ENCODE measurements at regions of chr14 and their contacts with region 1.

Region 1: DNA sequence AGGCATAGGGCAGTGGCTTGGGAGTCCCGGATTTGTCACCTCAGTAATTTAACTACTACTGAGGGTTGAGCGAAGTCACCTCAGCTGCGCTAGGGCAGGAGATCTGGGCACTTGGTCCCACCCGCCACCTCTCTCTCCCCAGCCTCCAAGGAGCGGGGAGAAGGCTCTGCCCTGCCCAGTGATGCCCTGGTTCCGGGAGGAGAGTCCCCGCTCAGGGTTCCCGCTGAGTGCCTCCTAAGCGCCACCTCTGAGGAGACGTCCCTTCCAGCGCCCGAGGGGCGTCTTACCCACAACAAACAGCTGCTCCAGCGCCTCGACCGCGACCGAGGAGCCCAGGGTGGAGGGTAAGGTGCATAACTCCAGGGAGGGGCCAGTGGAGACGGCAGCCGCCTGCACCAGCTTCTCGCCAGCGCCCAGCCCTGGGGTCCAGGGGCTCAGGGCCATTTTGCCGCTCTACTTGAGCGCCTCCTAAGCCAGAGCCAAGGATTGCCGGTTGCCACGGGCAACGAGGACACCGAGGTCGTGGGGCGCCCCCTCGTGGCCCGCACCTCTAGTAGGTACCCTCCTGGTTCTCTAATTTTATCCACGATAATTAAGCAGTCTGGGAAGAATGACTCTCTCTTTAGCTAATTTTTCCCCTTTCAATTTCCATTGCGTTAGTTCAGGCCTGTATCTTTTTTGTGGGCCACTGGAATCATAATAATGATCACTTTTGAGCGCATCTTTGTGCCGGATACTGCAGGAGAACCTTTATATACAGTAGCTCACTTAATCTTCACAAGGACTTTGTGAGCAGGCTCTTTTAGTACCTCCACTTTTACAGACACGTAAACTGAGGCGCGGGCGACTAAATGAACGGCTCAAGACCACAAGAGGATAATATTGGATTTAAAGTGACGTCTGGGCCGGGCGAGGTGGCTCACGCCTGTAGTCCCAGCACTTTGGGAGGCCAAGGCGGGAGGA is at the start of gene CCDC175:
- H3K4me3 ChIP-seq: peak within 1 kb of the TSS; percentile 63
- H3K27ac ChIP-seq: peak within 1 kb of the TSS; percentile 57; the same call in 1 of the 2 replicates
- H3K4me1 ChIP-seq: no peaks in the 10 kb centered on the region; the same call in 1 of the 2 replicates
- CTCF ChIP-seq: peak; percentile 90

Region 2: GRCh38 chr14:59126710-59127432 is 449.7 kb before region 1 on chr14:
- CTCF ChIA-PET with region 1: interaction called, 13 read pairs
- POLR2A ChIA-PET with region 1: no interaction called
- H3K4me3 ChIP-seq: no peak overlapping the region
- H3K27ac ChIP-seq: no peak overlapping the region
- H3K4me1 ChIP-seq: peaks cover under 1% of the 10 kb centered on the region; the same call in 1 of the 2 replicates
- CTCF ChIP-seq: 0 out of 2 replicates have a peak, but pooled peaks have one; percentile 24

Region 3: GRCh38 chr14:59422069-59422881 is 154.3 kb before region 1 on chr14:
- CTCF ChIA-PET with region 1: no interaction called
- POLR2A ChIA-PET with region 1: no interaction called
- H3K4me3 ChIP-seq: no peak overlapping the region
- H3K27ac ChIP-seq: no peak overlapping the region
- H3K4me1 ChIP-seq: no peaks in the 10 kb centered on the region
- CTCF ChIP-seq: no peak

Region 4: DNA sequence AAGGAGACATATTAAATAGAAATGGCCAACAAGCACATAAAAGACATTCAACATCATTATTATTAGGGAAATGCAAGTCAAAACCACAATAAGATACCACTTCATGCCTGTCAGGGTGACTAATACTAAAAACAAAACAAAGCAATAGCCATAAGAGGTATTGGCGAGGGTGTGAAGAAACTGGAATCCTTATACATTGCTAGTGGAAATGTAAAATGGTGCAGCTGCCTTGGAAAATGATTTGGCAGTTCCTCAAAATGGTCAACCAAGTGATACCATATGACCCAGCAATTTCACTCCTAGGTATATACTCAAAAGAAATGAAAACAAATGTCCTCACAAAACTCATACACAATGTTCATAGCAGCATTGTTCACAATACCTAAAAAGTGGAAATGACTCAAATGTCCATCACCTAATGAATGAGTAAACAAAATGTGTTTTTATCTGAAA is 138.4 kb before region 1 on chr14:
- CTCF ChIA-PET with region 1: no interaction called
- POLR2A ChIA-PET with region 1: no interaction called
- H3K4me3 ChIP-seq: no peak overlapping the region
- H3K27ac ChIP-seq: no peak overlapping the region
- H3K4me1 ChIP-seq: no peaks in the 10 kb centered on the region
- CTCF ChIP-seq: no peak

Region 5: GRCh38 chr14:59483900-59484638 is 92.5 kb before region 1 on chr14 and contains the starts of genes JKAMP and L3HYPDH:
- CTCF ChIA-PET with region 1: interaction called, 10 read pairs
- POLR2A ChIA-PET with region 1: no interaction called
- H3K4me3 ChIP-seq: peak within 1 kb of the TSS; percentile 84
- H3K27ac ChIP-seq: peak within 1 kb of the TSS; percentile 84
- H3K4me1 ChIP-seq: 0 out of 2 replicates have a peak, but pooled peaks cover 3% of the 10 kb centered on the region
- CTCF ChIP-seq: peak; percentile 95

Region 6: GRCh38 chr14:59507063-59507780 is 69.4 kb before region 1 on chr14:
- CTCF ChIA-PET with region 1: interaction called, 208 read pairs
- POLR2A ChIA-PET with region 1: interaction called, 7 read pairs
- H3K4me3 ChIP-seq: no peak overlapping the region
- H3K27ac ChIP-seq: no peak overlapping the region
- H3K4me1 ChIP-seq: no peaks in the 10 kb centered on the region; the same call in 1 of the 2 replicates
- CTCF ChIP-seq: 0 out of 2 replicates have a peak, but pooled peaks have one; percentile 50

Region 7: DNA sequence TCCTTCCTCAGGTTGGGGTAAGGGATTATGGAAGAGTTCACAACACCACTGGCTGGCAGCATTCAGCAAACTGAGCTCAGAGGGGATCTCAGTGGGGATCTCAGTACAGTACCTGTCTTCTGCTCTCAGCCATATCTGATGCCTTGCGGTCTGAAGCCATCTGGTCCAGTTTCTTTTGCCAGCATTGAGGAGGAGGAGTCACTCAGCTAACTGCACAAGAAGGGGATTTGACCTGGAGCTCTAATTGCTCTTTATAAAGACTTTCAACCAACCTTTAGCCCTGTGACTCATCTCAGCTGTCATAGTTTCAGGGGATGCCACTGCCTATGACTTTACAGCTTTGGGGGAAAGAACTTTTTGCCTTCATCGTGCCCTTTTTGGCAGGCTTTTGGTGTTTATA is 47.4 kb before region 1 on chr14:
- CTCF ChIA-PET with region 1: interaction called, 11 read pairs
- POLR2A ChIA-PET with region 1: no interaction called
- H3K4me3 ChIP-seq: no peak overlapping the region
- H3K27ac ChIP-seq: no peak overlapping the region
- H3K4me1 ChIP-seq: no peaks in the 10 kb centered on the region
- CTCF ChIP-seq: no peak

Region 8: GRCh38 chr14:59543873-59544272 is 32.7 kb before region 1 on chr14:
- CTCF ChIA-PET with region 1: interaction called, 20 read pairs
- POLR2A ChIA-PET with region 1: no interaction called
- H3K4me3 ChIP-seq: no peak overlapping the region
- H3K27ac ChIP-seq: no peak overlapping the region; the same call in 1 of the 2 replicates
- H3K4me1 ChIP-seq: peaks cover 25% of the 10 kb centered on the region
- CTCF ChIP-seq: no peak

Region 9: GRCh38 chr14:59564366-59564765 is 12.2 kb before region 1 on chr14:
- CTCF ChIA-PET with region 1: interaction called, 40 read pairs
- POLR2A ChIA-PET with region 1: no interaction called
- H3K4me3 ChIP-seq: no peak overlapping the region
- H3K27ac ChIP-seq: no peak overlapping the region
- H3K4me1 ChIP-seq: peaks cover 30% of the 10 kb centered on the region
- CTCF ChIP-seq: no peak

Region 10: DNA sequence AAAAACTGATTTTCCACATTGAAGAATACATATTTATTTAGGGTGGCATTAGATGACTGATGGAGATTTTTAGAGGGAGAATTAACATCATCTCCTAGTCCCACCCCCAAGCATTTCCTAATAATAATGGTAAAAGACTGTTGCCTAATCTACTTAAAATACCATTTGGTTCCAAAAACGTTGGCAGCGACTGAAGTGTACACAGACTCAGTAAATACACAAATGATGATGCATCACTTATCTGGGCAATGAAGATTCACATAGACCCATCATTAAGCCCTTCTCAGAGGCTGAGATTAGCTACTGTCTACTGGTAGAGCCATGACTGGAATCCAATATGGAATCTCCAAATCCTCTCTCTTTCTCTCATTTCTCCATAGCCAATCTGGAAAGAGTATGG is 275.7 kb after region 1 on chr14:
- CTCF ChIA-PET with region 1: no interaction called
- POLR2A ChIA-PET with region 1: no interaction called
- H3K4me3 ChIP-seq: no peak overlapping the region
- H3K27ac ChIP-seq: no peak overlapping the region
- H3K4me1 ChIP-seq: no peaks in the 10 kb centered on the region
- CTCF ChIP-seq: no peak

Measured in HEK293 (cell line).